ENCODE measurements at regions of chr13 and their contacts with region 1.

Region 1: DNA sequence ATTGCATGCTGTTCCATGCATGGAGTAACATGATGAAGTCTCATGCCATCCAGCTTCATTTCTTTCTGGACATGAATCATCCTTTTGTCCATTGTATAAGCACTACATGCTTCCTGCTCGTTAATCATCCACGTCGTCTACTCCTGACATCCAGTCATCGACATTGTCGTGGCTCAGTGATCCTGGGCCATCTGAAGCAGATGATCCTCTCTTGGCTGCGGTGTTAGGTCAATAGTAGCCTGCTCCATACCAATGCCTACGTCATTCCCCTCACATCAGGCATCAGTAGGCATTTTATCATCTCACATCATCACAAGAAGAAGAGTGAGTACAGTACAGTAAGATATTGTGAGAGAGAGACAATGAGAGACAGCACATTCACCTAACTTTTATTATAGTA is 7.9 kb upstream of the MYO16 start:
- DNase-seq: no peak
- H3K4me3 ChIP-seq: no peak overlapping the region
- CTCF ChIP-seq: no peak

Region 2: DNA sequence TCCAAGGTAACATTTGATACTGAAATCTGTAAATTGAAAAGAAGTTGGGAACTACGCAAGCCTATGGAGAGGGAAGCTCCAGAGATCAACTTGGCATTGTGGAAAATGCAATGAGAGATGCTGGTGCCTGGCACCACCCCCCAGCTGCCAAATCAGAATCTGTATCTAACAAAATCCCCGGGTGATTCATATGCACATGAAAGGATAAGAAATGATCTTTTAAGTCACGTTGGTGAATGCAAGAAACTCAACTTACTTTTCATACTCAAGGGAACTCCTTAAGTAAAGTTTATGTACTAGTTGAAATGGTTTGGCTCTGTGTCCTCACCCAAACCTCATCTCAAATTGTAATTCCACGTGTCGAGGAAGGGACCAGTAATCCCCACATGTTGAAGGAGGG is 150.5 kb before region 1 on chr13:
- in situ Hi-C with region 1: no loop called
- DNase-seq: no peak
- H3K4me3 ChIP-seq: no peak overlapping the region
- CTCF ChIP-seq: no peak

Region 3: DNA sequence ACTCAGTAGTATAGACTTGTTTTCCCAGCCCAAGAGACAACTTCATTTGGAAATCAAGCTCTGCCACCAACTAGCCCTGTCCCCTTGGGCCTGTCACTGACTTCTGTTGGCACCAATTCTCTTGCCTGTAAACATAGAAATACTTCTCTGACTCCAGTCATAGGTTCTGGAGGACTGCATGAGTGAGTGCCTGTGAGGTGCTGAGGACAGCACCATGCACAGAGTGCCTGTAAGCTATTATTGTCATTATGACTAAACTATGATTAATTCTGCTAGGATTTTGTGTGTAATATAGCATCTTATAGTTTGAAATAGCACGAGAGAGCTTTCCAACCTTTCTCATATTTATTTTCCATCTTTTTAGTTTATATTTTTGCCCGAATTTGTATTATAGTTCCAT is 255.8 kb after region 1 on chr13:
- in situ Hi-C with region 1: loop called (anchors 5 kb)
- DNase-seq: no peak
- H3K4me3 ChIP-seq: no peak overlapping the region
- CTCF ChIP-seq: no peak

Measured in astrocyte of the cerebellum (primary cell).